Psoas muscle (tissue), 8 donors: ENCODE measurements at regions of chr9 and their contacts with region 1.

Region 1: GRCh38 chr9:69645488-69645887 is 26.7 kb downstream of the APBA1 start:
- DNase-seq: peak in 1 of 2 donors; percentile 46
- ATAC-seq: peak in 3 of 4 donors; percentile 49 to 70 (median 63)
- H3K4me3 ChIP-seq: no peak overlapping the region
- H3K27ac ChIP-seq: no peak overlapping the region
- H3K4me1 ChIP-seq: no peaks in the 10 kb centered on the region
- H3K27me3 ChIP-seq: no peaks in the 10 kb centered on the region
- CTCF ChIP-seq: no peak

Region 2: GRCh38 chr9:69599232-69599971 is 46.1 kb before region 1 on chr9:
- intact Hi-C with region 1: loop called in 1 of 2 experiments (anchors 5 kb)
- DNase-seq: no peak
- ATAC-seq: no peak
- H3K4me3 ChIP-seq: no peak overlapping the region
- H3K27ac ChIP-seq: no peak overlapping the region
- H3K4me1 ChIP-seq: no peaks in the 10 kb centered on the region
- H3K27me3 ChIP-seq: no peaks in the 10 kb centered on the region
- CTCF ChIP-seq: no peak